ENCODE measurements at regions of chr15 and their contacts with region 1.

Region 1: DNA sequence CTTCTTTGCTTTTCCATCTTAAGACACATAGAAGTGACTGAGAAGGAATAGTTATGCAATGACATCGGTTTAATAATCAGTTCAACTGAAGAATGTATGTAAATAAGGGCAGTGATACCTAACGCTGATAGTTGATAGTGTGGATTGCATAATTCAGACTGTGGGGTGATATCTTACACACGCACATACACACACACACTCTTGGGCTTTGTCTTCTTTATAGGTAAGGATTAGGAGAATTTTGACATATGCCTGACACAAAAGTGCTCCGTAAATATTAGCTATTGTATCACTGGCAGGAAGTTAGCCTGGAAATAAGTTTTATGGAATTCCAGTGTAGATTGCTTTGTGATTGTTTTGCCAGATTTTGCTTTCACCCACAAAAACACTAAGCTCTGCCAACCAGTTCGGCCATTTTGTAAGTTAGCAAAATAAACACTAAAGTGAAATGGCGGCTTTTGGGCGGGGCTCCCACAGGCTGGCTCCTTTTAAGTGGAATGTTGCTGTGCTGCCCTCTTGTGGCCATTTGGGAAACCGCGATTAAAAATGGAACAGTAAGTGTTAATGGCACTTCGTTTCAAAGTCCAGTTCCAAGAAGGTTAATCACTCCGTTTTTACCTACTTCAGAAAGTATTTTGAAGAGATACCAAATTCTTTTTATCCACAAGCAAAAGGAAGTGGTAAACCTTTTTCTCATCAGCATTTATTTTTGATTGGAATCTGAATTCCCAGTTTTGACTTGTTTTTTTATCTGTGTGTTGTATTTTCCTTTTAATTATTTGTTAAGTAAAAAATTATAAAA is 17.7 kb downstream of the CHD2 start:
- DNase-seq: peak; percentile 79 to 98
- H3K4me3 ChIP-seq: peak overlapping the region; percentile 7 to 42
- H3K27ac ChIP-seq: peak overlapping the region; percentile 96 to 97
- H3K4me1 ChIP-seq: peaks cover 9 to 91% of the 10 kb centered on the region in 2 donors
- H3K27me3 ChIP-seq: no peaks in the 10 kb centered on the region
- CTCF ChIP-seq: peak; percentile 75 to 92 (median 88)

Region 2: DNA sequence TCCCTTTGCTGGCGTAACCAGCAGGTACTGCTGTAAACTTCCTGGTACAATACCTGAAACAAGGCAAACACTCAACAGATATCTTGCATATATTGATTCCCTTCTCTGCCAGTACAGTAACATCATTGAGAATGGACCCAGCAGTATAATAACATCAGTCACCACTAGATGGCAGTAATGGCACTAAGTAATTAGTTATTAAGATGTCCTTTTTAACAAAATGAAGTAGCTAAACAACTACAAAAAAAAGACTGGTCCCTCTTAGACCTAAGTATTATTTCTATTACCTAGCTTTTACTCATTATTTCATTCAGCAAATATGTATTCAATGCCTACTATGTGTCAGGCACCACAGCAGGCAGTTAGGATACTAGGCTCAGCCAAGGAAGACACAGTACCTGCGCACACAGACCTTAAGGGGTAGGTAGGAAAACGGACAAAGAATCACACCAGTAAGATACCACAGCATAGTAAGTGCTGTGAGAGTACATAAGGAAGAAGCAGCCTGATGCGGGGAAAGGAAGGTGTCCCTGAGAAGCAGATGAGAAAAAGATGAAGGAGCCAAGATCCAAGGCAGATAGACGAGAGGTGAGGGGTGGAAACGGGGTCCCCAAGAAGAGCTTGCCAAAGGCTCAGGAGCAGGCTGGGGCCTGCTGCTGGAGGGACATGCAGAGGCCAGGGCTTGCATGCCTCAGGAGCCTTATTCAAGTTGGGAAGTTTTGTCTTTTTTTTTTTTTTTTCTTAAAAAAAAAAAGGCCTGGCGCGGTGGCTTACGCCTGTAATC is 120.4 kb before region 1 on chr15:
- intact Hi-C with region 1: loop called (anchors 2 kb)
- DNase-seq: peak in 1 of 2 donors; percentile 56
- H3K4me3 ChIP-seq: no peak overlapping the region
- H3K27ac ChIP-seq: peak overlapping the region; percentile 44 to 60
- H3K4me1 ChIP-seq: peaks cover 8 to 12% of the 10 kb centered on the region in 2 donors
- H3K27me3 ChIP-seq: no peaks in the 10 kb centered on the region
- CTCF ChIP-seq: peak; percentile 43 to 72 (median 63)

Region 3: DNA sequence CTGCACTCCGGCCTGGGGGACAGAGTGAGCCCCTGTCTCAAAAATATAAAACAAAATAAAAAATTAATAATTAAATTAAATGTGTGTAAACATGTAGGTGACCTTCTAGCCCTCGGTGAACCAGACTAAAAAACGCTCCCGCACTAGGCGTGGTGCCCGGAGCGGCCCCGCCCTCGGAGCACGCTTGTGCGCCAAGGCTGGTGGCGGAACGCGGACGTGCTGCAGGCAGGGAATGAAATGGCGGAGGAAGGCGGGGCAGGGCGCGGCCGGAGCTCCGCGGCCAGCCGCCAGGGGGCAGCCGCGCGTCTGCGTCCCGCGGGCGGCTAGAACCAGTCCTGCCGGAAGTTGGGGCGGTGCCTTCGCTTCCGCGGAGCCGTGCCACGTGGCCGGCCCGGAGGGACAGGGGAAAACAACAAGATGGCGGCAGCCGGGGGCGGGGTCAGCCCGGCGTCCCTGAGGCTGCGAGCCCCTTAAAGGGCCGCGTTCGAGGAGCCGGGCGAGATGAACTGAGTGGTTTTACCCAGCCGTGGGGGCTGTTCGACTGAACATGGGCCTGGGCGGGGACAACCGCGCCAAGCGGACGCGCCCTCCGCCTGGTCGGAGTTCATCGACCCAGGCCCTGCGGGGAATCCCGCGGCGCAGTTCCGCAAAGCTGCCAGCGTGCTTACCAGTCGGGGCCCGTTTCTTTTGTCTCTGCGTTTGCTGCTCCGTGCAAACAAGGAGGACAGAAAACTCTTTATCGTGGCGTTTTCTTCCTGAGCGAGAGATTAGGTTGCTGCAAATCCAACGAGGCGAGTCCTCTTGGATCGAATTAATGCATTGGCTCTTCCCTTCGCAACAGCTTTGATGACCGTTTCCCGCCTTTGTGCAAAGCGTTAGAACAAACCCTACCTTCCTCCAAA is 108.6 kb before region 1 on chr15:
- intact Hi-C with region 1: loop called (anchors 1 kb)
- DNase-seq: peak; percentile 94 to 99
- H3K4me3 ChIP-seq: peak overlapping the region; percentile 69 to 72
- H3K27ac ChIP-seq: peak overlapping the region; percentile 91 to 98
- H3K4me1 ChIP-seq: peaks cover 3 to 34% of the 10 kb centered on the region in 2 donors
- H3K27me3 ChIP-seq: no peaks in the 10 kb centered on the region
- CTCF ChIP-seq: peak; percentile 85 to 100 (median 89)

Region 4: GRCh38 chr15:92831655-92832328 is 86.0 kb before region 1 on chr15:
- intact Hi-C with region 1: loop called (anchors 2 kb)
- DNase-seq: peak; percentile 87 to 97
- H3K4me3 ChIP-seq: peak overlapping the region; percentile 44 to 60
- H3K27ac ChIP-seq: peak overlapping the region; percentile 93 to 94
- H3K4me1 ChIP-seq: peaks cover 10 to 56% of the 10 kb centered on the region in 2 donors
- H3K27me3 ChIP-seq: no peaks in the 10 kb centered on the region
- CTCF ChIP-seq: no peak

Region 5: DNA sequence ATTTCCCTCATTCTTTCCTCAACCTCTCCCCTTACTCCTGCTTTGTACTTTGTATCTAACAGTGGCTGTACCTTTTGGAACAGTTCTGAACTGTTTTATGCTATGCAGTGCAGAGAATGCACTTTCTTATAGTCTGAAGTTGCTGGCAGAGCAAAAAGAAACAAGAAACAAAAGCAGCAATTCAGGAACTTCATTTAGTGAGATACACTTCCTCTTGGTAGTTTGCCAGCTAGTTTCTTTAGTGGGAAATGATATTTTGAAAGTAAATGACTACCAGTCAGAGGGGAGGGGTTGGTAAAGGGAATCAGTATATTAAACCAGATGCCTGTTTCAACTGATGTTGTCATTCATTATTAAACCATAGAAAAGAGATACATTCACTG is 72.7 kb before region 1 on chr15:
- intact Hi-C with region 1: no loop called
- DNase-seq: no peak
- H3K4me3 ChIP-seq: no peak overlapping the region
- H3K27ac ChIP-seq: no peak overlapping the region
- H3K4me1 ChIP-seq: no peaks in the 10 kb centered on the region
- H3K27me3 ChIP-seq: no peaks in the 10 kb centered on the region
- CTCF ChIP-seq: no peak

Region 6: GRCh38 chr15:92881802-92882696 is 35.8 kb before region 1 on chr15:
- intact Hi-C with region 1: loop called (anchors 5 kb)
- DNase-seq: peak; percentile 98 to 100
- H3K4me3 ChIP-seq: peak overlapping the region; percentile 94 to 99
- H3K27ac ChIP-seq: peak overlapping the region; percentile 88 to 100
- H3K4me1 ChIP-seq: peaks cover 0 to 14% of the 10 kb centered on the region in 2 donors
- H3K27me3 ChIP-seq: no peaks in the 10 kb centered on the region
- CTCF ChIP-seq: no peak

Region 7: DNA sequence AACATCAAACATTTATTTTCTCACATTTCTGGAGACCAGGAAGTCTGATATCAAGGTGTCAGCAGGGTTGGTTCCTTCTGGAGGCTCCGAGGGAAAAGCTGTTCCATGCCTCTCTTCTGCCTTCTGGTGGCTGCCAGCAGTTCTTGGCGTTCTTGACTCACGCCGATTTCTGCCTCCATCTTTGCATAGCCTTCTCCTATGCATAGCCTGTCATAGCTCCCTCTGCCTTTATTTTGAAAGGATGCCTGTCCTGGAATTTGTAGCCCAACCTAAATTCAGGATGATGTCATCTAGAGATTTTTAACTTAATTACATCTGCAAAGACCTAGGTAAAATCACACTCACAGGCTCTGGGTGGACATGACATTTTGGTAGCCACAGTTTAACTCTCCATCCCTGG is 100.8 kb after region 1 on chr15:
- intact Hi-C with region 1: loop called (anchors 10 kb)
- DNase-seq: peak in 1 of 2 donors; percentile 62
- H3K4me3 ChIP-seq: no peak overlapping the region
- H3K27ac ChIP-seq: peak overlapping the region; percentile 62 to 77
- H3K4me1 ChIP-seq: peaks cover 0 to 8% of the 10 kb centered on the region in 2 donors
- H3K27me3 ChIP-seq: no peaks in the 10 kb centered on the region
- CTCF ChIP-seq: peak in 1 of 3 experiments; percentile 26

Region 8: DNA sequence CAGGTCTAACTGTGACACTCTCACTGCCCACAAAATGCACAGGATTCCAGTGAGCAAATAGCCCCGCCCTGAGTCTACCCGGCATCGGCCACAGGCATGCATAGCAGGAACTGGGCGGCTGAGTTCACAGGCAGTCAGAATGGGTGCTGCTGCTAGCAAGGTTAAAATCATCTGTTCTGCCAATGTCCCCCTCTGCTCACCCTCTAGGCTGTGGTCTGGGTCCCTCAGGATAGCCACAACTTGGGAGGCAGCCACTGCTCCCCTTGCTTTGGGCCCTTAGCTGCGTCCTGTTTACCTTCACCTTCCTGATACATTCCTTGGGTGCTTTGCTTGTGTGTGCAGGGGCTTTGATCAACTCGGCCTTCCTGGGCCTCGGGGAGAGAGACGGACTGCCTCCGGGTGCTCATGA is 404.1 kb after region 1 on chr15:
- intact Hi-C with region 1: loop called (anchors 5 kb)
- DNase-seq: no peak
- H3K4me3 ChIP-seq: no peak overlapping the region
- H3K27ac ChIP-seq: no peak overlapping the region
- H3K4me1 ChIP-seq: no peaks in the 10 kb centered on the region
- H3K27me3 ChIP-seq: no peaks in the 10 kb centered on the region
- CTCF ChIP-seq: no peak